ENCODE measurements at regions of chr10 and their contacts with region 1.

Region 1: GRCh38 chr10:114703377-114704107 is 45.5 kb upstream of the ABLIM1 start:
- DNase-seq: peak; percentile 48
- H3K4me3 Mint-ChIP-seq: no peak overlapping the region
- H3K27ac Mint-ChIP-seq: no peak overlapping the region
- H3K4me1 Mint-ChIP-seq: peaks cover 19% of the 10 kb centered on the region
- H3K27me3 Mint-ChIP-seq: no peaks in the 10 kb centered on the region
- CTCF ChIP-seq: peak; percentile 81

Region 2: DNA sequence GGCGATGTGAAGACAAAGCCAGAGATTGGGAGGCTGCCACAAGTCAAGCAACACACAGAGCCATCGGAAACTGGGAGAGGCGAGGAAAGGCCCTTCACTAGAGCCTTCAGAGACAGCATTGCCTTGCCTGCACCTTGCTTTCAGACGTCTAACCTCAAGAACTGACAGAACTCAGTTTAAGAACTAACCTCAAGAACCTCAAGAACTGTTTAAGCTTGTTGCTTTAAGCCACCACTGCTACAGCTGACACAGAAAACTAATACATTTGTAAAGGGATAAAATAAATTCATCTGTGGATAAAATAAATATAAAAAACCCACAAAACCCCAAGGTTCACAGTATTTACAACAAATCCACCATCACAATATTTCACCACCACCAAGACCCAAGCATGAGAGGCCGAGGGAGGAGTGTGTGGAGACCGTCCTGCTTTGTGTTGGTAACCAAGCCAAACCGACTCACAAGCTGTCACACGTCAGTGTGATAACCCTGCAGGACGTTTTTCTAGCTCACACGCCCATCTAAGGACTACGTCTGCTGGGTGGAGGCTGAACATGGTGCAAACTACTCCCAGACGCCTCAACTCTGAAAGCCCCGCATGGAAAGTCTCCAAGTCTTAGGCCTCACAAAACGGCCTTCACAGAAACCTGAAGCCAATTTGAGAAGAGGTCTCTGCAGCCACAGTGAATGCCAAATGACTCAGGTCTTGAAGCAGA is 162.3 kb before region 1 on chr10:
- CTCF ChIA-PET with region 1: interaction called, 5 read pairs
- POLR2A ChIA-PET with region 1: no interaction called
- intact Hi-C with region 1: loop called (anchors 1 kb)
- DNase-seq: peak; percentile 54
- H3K4me3 Mint-ChIP-seq: no peak overlapping the region
- H3K27ac Mint-ChIP-seq: peak overlapping the region; percentile 9
- H3K4me1 Mint-ChIP-seq: peaks cover 12% of the 10 kb centered on the region
- H3K27me3 Mint-ChIP-seq: no peaks in the 10 kb centered on the region
- CTCF ChIP-seq: no peak

Region 3: GRCh38 chr10:114714281-114714741 is 10.8 kb after region 1 on chr10:
- CTCF ChIA-PET with region 1: interaction called, 10 read pairs
- POLR2A ChIA-PET with region 1: interaction called, 17 read pairs
- intact Hi-C with region 1: no loop called
- DNase-seq: peak; percentile 97
- H3K4me3 Mint-ChIP-seq: peak overlapping the region; percentile 55
- H3K27ac Mint-ChIP-seq: peak overlapping the region; percentile 87
- H3K4me1 Mint-ChIP-seq: peaks cover 40% of the 10 kb centered on the region
- H3K27me3 Mint-ChIP-seq: no peaks in the 10 kb centered on the region
- CTCF ChIP-seq: no peak

Region 4: GRCh38 chr10:114779803-114780609 is 76.5 kb after region 1 on chr10:
- CTCF ChIA-PET with region 1: interaction called, 40 read pairs
- POLR2A ChIA-PET with region 1: interaction called, 3 read pairs
- intact Hi-C with region 1: no loop called
- DNase-seq: peak; percentile 94
- H3K4me3 Mint-ChIP-seq: no peak overlapping the region
- H3K27ac Mint-ChIP-seq: peak overlapping the region; percentile 74
- H3K4me1 Mint-ChIP-seq: peaks cover 27% of the 10 kb centered on the region
- H3K27me3 Mint-ChIP-seq: no peaks in the 10 kb centered on the region
- CTCF ChIP-seq: no peak

Region 5: GRCh38 chr10:114893251-114893650 is 189.7 kb after region 1 on chr10:
- CTCF ChIA-PET with region 1: no interaction called
- POLR2A ChIA-PET with region 1: no interaction called
- intact Hi-C with region 1: no loop called
- DNase-seq: no peak
- H3K4me3 Mint-ChIP-seq: no peak overlapping the region
- H3K27ac Mint-ChIP-seq: no peak overlapping the region
- H3K4me1 Mint-ChIP-seq: peaks cover 6% of the 10 kb centered on the region
- H3K27me3 Mint-ChIP-seq: no peaks in the 10 kb centered on the region
- CTCF ChIP-seq: no peak

Measured in MCF 10A (cell line).